ENCODE measurements at regions of chr10 and their contacts with region 1.

Region 1: DNA sequence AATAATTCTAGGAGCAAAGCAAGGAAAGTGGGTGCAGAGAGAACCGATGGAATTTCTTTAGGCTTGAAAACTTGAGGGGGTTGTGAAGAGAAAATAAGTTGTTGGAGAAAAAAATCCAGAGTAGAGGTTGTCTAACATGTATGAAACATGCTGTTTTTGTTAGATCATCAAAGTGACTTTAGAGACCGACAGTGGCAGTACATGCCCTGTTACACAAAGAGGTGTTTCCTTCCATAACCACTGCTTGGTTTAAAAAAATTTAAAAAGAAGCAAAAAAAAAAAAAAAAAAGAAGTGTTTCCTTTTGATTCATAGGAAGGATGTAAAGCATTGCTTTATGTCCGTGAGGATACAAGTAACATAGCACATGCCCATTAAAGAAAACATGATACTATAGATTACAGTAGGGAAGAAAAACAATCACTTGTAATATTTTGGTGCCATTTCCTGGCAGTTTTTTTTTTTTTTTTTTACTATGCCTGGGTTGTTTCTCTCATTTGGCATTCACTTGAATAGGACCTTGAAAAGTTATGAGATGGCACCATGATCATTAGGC is 6.1 kb downstream of the ENTPD1 start:
- DNase-seq: peak; percentile 79
- H3K4me3 ChIP-seq: no peak overlapping the region
- H3K27ac ChIP-seq: peak overlapping the region; percentile 16
- H3K4me1 ChIP-seq: peaks cover 29% of the 10 kb centered on the region
- H3K27me3 ChIP-seq: no peaks in the 10 kb centered on the region
- CTCF ChIP-seq: no peak
- POLR2A ChIP-seq: no peak

Region 2: DNA sequence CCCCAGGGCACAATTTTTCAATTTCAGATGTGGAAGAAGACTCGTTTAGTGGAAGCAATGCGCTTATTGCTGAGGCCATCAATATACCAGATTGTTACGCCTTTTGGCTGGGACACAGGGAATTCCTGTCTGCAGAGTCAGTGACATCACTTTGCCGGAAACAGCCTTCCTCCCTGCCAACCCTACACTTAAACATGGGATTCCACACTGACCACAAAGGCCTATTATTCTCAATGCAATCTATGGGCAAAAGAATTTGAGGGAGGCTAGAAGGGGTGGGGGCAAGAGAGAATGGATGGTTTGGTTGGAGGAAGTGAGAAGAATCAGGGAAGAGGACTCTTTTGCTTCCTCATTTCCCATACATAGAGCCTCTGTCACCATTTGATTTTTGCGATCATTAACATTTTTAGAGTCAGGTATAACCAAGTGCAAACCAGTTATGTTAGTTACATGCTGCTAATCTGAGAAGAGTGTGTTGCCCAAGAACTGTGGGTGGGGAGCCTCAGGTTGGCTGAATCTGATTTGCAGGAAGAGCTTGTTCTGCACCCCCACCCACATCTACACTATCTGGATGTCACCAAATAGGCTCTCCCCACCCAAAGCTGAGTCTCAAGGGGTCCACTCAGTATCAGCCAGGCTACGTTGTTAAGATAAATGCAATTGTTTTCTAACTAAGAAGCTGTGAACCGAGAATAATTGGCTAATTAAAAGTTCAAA is 52.2 kb after region 1 on chr10:
- CTCF ChIA-PET with region 1: no interaction called
- POLR2A ChIA-PET with region 1: no interaction called
- dilution Hi-C with region 1: no loop called
- intact Hi-C with region 1: loop called (anchors 1 kb)
- DNase-seq: peak; percentile 76
- H3K4me3 ChIP-seq: no peak overlapping the region
- H3K27ac ChIP-seq: peak overlapping the region; percentile 41
- H3K4me1 ChIP-seq: peaks cover 46% of the 10 kb centered on the region
- H3K27me3 ChIP-seq: no peaks in the 10 kb centered on the region
- CTCF ChIP-seq: no peak
- POLR2A ChIP-seq: no peak